Uterus (tissue), 4 donors: ENCODE measurements at regions of chr22 and their contacts with region 1.

Region 1: GRCh38 chr22:25582946-25583345 is 18.5 kb downstream of the GRK3 start:
- DNase-seq: no peak
- H3K4me3 ChIP-seq: no peak overlapping the region
- H3K27ac ChIP-seq: no peak overlapping the region
- H3K4me1 ChIP-seq: no peaks in the 10 kb centered on the region
- H3K27me3 ChIP-seq: no peaks in the 10 kb centered on the region
- CTCF ChIP-seq: no peak
- POLR2A ChIP-seq: no peak

Region 2: DNA sequence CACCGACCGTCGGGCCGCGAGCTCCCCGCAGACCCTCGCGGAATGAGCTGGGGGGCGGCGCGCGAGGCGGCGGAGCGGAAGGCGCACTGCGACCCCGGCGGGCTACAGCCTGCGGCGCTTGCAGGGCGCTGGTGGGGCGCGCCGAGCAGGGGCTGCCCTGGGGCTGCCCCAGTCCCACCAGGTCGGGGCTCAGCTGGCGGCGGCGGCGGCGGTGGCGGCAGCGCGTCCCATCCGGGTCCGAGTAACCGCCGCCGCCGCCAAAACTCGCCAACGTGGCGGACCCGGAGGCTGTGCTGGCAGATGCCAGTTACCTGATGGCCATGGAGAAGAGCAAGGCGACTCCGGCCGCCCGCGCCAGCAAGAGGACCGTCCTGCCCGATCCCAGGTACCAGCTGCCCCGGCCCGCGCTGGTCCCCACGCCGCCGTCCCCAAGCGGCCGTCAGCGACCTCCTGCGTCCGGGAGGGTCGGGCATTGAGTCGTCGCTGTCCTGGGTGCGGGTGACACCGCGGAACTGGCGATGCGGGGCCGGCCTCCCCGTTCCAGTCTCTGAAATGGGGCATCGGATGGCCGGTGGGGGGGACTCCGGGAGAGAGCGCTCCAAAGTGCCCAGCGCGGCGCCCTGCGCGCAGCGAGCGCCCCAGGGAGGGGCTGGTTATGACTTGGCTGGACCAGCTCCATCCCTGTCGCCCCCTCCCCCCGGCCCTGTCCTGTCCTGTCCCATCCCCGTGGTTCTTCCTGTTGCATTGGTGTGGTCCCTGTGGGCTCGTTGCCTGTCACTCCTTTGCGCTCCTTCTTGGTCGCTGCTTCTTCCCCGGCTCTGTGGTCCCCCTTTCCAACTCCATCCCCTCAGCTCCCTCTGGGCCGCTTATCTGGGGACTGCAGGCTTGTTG is 300.0 kb before region 1 on chr22:
- intact Hi-C with region 1: loop called (anchors 10 kb)
- DNase-seq: no peak
- H3K4me3 ChIP-seq: no peak overlapping the region
- H3K27ac ChIP-seq: no peak overlapping the region
- H3K4me1 ChIP-seq: peaks cover 0 to 8% of the 10 kb centered on the region in 2 donors
- H3K27me3 ChIP-seq: peaks cover 0 to 12% of the 10 kb centered on the region in 2 donors
- CTCF ChIP-seq: no peak
- POLR2A ChIP-seq: no peak